AG04449 (cell line): ENCODE measurements at regions of chr11 and their contacts with region 1.

Region 1: DNA sequence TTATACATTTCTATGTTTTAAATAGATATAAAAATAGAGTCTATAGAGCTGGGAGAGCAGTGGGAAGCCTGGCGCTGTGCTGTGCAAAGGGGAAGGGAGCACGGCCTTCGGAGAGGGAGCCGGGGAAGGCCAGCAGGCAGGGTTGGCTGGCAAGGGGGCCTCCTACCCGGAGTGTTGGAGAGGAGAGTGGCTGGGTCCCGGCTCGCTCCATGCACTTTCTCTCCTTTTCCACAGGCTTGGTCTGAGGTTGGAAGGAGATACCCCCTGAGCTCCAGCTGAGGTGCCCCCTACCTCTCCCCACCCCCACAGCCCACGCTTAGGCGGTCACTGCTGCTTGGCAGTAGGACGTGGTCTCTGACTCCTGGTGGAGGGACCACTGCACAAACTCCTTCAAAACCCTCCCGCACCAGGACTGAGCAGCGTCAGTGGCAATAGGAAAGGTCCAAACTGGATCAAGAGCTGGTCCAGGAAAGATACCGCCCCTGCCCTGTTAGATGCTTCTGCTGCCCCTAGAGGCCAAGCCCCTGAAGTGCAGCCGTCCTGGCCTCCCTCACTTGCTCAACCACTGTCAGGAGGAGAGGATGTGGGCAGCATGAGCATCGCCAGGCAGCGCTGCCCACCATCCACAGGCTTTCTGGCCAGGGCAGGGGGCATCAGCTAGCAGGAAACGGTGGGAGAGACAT is 52.9 kb downstream of the SYT13 start:
- DNase-seq: no peak
- H3K4me3 ChIP-seq: no peak overlapping the region
- CTCF ChIP-seq: peak; percentile 92

Region 2: DNA sequence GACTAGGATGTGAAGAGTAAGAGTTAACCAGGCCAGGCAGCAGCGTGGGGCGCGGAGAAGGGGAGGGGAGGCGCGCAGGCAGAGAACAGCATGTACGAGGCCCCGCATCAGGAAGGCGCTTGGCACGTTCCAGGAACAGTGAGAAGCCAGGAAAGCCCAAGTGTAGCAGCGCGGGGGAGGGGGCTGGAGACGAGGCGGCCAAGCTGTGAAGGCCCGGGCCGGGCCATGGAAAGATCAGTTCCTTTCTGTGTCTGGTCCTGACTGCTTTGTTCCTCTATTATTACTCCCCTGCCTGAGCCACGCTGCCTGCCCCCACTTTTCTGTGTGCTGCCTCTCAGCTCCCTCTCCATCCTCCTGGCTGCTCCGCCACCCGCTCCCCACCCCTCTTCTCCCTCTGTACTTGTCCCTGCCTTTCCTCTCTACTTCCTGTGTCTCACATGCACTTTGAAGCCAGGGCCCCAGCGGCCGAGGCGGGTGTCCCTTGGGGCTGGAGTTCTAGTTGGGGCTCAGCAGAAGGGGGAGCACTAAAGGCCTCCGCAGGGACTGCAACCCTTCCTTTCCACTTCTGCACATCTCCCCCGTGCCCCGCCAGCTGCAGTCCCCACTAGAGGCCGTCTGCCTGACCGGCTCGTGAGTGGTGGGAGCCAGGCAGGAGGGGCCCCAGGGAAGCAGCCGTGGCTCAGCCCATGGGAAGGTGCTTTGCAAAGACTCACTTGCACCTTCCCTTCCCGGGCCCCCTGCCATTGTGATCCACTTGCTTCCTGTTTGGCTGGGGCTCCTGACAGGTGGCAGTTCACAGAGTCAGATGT is 23.2 kb before region 1 on chr11:
- CTCF ChIA-PET with region 1: interaction called, 11 read pairs
- POLR2A ChIA-PET with region 1: interaction called, 4 read pairs
- DNase-seq: no peak
- H3K4me3 ChIP-seq: no peak overlapping the region
- CTCF ChIP-seq: no peak

Region 3: GRCh38 chr11:45245218-45246045 is 12.2 kb after region 1 on chr11:
- CTCF ChIA-PET with region 1: interaction called, 15 read pairs
- POLR2A ChIA-PET with region 1: no interaction called
- DNase-seq: no peak
- H3K4me3 ChIP-seq: no peak overlapping the region
- CTCF ChIP-seq: no peak

Region 4: DNA sequence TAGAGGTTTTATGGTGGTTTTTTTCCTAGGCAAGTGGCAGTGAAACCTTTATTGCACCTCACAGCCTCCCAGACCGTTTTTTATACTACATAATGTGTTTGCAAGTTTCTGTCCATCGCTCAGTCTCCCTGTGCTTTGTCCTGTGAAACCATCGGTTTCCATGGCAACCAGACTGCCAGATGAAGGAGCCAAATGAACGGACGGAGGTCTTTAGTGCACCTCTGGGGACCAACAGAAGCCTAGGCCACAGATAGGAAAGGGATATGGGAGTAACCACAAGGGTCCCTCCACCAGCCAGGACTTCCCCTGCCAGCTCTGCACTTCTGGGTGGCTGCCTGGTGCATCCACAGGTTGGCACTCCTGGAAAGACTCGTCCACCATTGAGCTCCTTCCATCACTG is 267.2 kb after region 1 on chr11:
- CTCF ChIA-PET with region 1: no interaction called
- POLR2A ChIA-PET with region 1: no interaction called
- DNase-seq: no peak
- H3K4me3 ChIP-seq: no peak overlapping the region
- CTCF ChIP-seq: no peak